ENCODE measurements at regions of chr17 and their contacts with region 1.

Region 1: DNA sequence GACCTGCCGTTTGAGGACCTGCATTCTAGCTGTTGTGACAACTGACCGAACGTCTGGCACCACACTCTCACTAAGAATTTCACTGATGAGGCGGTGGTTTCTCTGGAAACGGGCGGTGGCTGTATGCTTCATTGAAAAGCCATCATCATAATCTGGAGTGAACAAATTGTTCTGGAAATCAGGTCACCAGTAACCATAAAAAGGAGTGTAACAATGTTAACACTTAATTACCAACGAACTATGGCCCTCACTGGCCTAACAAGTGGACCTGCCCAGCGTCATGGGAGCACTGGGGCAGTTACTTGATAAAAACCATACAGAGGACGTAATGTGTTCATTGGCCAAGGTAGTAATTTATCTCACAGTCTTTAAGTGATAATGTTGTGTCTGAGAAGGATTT is 15.4 kb downstream of the SMARCE1 start:
- DNase-seq: no peak
- H3K4me3 ChIP-seq: no peak overlapping the region
- H3K27ac ChIP-seq: no peak overlapping the region
- H3K4me1 ChIP-seq: no peaks in the 10 kb centered on the region
- H3K27me3 ChIP-seq: no peaks in the 10 kb centered on the region
- CTCF ChIP-seq: no peak
- POLR2A ChIP-seq: no peak

Region 2: DNA sequence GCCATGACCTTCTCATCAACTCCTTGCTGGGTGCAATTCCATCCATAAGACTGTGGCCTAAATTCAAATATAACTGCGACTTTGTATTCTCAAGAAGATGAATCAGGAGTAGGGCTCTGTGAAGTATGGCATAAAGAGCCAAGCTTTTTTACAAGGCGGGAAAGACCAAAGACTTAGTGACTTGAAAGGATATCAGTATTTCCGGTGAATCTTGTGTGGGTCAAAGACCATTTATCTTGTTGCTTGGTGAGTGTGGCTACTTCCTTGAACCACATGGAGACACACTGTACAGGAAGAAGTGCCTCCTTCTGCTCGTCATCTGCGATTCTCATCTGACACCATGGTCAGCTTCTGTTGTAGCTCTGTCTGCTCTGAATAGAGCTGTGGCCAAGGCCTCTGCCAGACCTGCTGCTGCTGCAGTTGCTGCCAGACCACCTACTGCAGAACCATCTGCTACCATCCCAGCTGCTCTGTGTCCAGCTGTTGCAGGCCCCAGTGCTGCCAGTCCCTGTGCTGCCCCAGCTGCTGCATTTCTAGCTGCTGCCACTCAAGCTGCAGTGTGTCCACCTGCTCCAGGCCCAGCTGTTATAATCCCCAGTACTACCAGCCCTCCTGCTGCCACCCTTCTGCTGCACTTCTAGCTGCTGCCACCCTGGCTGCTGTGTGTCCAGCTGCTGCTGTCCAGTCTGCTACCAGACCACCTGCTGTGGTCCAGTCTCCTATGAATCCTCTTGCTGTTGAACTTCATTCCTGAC is 439.6 kb after region 1 on chr17:
- intact Hi-C with region 1: no loop called
- DNase-seq: no peak
- H3K4me3 ChIP-seq: no peak overlapping the region
- H3K27ac ChIP-seq: no peak overlapping the region
- H3K4me1 ChIP-seq: no peaks in the 10 kb centered on the region
- H3K27me3 ChIP-seq: no peaks in the 10 kb centered on the region
- CTCF ChIP-seq: no peak
- POLR2A ChIP-seq: no peak

Region 3: GRCh38 chr17:41894791-41895331 is 1262.6 kb after region 1 on chr17:
- intact Hi-C with region 1: loop called (anchors 5 kb)
- DNase-seq: no peak
- H3K4me3 ChIP-seq: no peak overlapping the region
- H3K27ac ChIP-seq: peak overlapping the region in 1 of 2 donors; percentile 80
- H3K4me1 ChIP-seq: no peaks in the 10 kb centered on the region
- H3K27me3 ChIP-seq: no peaks in the 10 kb centered on the region
- CTCF ChIP-seq: no peak
- POLR2A ChIP-seq: no peak

Measured in breast epithelium (tissue), 4 donors.